ENCODE measurements at regions of chr9 and their contacts with region 1.

Region 1: DNA sequence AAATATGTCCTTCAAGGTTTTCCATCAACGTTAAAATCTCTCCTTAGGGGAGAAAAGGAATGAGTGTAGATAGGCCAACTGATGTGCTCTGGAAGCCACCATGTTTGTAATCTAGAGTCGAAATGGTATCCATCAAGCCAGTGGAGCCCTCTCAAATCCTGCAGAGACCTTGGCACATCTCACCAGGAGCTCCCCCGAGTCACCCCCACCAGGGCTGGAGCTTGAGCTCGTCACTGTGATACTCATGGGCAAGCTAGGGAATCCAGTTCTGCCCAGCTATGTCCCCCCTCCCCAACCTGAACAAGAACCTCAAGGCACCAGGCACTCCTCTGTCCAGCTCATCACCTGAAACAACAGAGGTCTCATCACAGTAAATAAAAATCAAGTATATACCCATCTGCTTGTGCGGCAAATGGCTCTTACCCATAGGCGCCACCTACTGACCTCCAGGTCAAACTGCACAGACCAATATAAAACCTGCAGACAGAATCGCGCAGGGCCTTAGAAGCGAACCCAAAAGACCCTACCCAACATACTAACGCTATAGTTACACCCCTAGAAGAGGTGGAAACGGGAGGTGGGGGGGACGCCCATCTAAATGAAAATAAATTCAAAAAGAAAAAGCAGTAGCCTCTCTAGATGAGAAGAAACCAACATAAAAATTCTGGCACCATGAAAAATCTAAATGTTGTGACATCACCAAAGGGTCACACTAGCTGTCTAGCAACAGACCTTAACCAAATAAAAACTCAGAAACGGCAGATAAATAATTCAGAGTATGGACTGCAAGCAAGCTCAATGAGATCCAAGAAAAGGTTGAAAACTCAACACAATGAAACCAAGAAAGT is 75.0 kb downstream of the TTC39B start:
- DNase-seq: peak; percentile 29
- ATAC-seq: peak; percentile 97
- H3K4me3 ChIP-seq: no peak overlapping the region
- H3K27ac ChIP-seq: no peak overlapping the region
- H3K4me1 ChIP-seq: no peaks in the 10 kb centered on the region
- H3K27me3 ChIP-seq: no peaks in the 10 kb centered on the region
- CTCF ChIP-seq: peak; percentile 32 to 80 (median 77); a peak in 4 of 6 replicates
- POLR2A ChIP-seq: no peak
- RAD21 ChIP-seq: peak; percentile 35; the same call in 1 of the 2 replicates

Region 2: DNA sequence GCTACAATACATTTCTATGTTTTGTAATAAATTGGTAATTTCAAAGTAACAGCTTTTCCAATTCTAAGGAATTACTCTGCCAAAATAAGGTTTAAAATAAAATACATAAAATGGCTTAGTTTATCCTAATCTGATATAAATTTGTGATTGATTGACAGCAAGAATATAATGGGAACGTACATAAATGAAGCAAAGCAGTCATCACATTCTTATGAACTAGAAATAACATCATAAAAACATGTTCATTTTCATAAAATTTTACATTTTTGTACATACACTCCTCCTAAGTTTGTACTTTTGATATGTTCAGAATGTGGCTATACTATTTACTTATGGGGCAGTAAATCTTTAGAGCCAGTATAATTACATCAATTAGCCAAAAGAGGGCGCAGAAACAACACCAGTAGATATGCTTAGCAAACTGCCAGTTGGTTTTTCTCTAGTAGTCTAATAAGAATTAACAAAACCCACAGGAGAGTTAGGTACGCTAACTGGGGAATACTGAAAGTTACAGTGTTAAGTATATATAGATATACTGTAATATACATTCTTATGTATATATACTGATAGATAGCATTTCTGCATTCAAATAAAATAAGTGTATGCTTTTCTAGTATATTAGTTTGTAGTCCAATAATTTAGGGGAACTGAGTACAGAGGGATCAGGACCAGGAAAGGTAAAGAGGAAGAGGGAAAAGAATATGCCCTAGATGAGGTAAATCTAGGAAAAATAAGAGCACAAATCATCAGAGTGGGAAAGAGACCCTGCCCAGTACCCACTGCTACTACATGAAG is 615.6 kb before region 1 on chr9:
- CTCF ChIA-PET with region 1: no interaction called
- POLR2A ChIA-PET with region 1: no interaction called
- RAD21 ChIA-PET with region 1: no interaction called
- intact Hi-C with region 1: no loop called
- DNase-seq: peak; percentile 32
- ATAC-seq: peak; percentile 64; the same call in 1 of the 2 replicates
- H3K4me3 ChIP-seq: no peak overlapping the region
- H3K27ac ChIP-seq: no peak overlapping the region
- H3K4me1 ChIP-seq: no peaks in the 10 kb centered on the region
- H3K27me3 ChIP-seq: no peaks in the 10 kb centered on the region
- CTCF ChIP-seq: peak; percentile 57 to 73 (median 59); a peak in 5 of 6 replicates
- POLR2A ChIP-seq: no peak
- RAD21 ChIP-seq: peak; percentile 60

Region 3: GRCh38 chr9:15277400-15278090 is 45.5 kb after region 1 on chr9:
- CTCF ChIA-PET with region 1: no interaction called
- POLR2A ChIA-PET with region 1: no interaction called
- RAD21 ChIA-PET with region 1: no interaction called
- intact Hi-C with region 1: loop called (anchors 5 kb)
- DNase-seq: peak; percentile 4
- ATAC-seq: no peak
- H3K4me3 ChIP-seq: no peak overlapping the region
- H3K27ac ChIP-seq: no peak overlapping the region
- H3K4me1 ChIP-seq: peaks cover 4 to 8% of the 10 kb centered on the region in 2 experiments; a peak in 2 of 4 replicates
- H3K27me3 ChIP-seq: no peaks in the 10 kb centered on the region
- CTCF ChIP-seq: peak in 2 of 3 experiments; percentile 40 to 52; a peak in 3 of 6 replicates
- POLR2A ChIP-seq: no peak
- RAD21 ChIP-seq: peak; percentile 63

Measured in HCT116 (cell line).